ENCODE measurements at regions of chr2 and their contacts with region 1.

Region 1: GRCh38 chr2:45237850-45238542 is 228.7 kb upstream of the SIX2 start:
- DNase-seq: peak; percentile 99
- ATAC-seq: peak; percentile 90
- H3K4me3 ChIP-seq: 0 out of 2 replicates have a peak overlapping the region, but pooled peaks have one; percentile 11
- H3K27ac ChIP-seq: peak overlapping the region; percentile 95
- H3K4me1 ChIP-seq: peaks cover 52% of the 10 kb centered on the region
- H3K27me3 ChIP-seq: no peaks in the 10 kb centered on the region
- CTCF ChIP-seq: peak; percentile 71

Region 2: GRCh38 chr2:44981136-44982108 is 256.6 kb before region 1 on chr2:
- CTCF ChIA-PET with region 1: no interaction called
- POLR2A ChIA-PET with region 1: no interaction called
- intact Hi-C with region 1: loop called (anchors 1 kb)
- DNase-seq: peak; percentile 89
- ATAC-seq: peak; percentile 97
- H3K4me3 ChIP-seq: no peak overlapping the region
- H3K27ac ChIP-seq: no peak overlapping the region
- H3K4me1 ChIP-seq: peaks cover 6% of the 10 kb centered on the region
- H3K27me3 ChIP-seq: no peaks in the 10 kb centered on the region
- CTCF ChIP-seq: peak; percentile 92

Region 3: DNA sequence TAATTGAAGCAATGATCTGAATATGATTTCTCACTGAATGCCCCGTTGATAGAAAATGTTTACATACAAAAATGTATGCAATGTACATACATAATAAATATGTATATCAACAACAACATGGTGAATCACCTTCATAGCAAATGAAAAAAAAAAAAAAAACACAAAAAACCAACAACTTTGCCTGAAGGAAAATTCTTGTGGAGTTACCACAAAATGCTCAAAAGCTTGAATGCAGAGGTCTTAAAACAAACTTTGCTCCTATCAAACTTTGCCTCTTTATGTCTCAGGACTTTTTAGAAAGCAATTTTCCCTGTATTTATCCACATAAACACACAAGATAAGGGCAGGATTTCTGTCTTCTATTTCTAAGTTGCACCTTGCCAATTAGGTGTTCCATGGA is 135.9 kb before region 1 on chr2:
- CTCF ChIA-PET with region 1: no interaction called
- POLR2A ChIA-PET with region 1: no interaction called
- intact Hi-C with region 1: loop called (anchors 5 kb)
- DNase-seq: peak; percentile 59
- ATAC-seq: no peak
- H3K4me3 ChIP-seq: peak overlapping the region; percentile 7; the same call in 1 of the 2 replicates
- H3K27ac ChIP-seq: peak overlapping the region; percentile 43
- H3K4me1 ChIP-seq: peaks cover 38% of the 10 kb centered on the region
- H3K27me3 ChIP-seq: no peaks in the 10 kb centered on the region
- CTCF ChIP-seq: no peak

Region 4: DNA sequence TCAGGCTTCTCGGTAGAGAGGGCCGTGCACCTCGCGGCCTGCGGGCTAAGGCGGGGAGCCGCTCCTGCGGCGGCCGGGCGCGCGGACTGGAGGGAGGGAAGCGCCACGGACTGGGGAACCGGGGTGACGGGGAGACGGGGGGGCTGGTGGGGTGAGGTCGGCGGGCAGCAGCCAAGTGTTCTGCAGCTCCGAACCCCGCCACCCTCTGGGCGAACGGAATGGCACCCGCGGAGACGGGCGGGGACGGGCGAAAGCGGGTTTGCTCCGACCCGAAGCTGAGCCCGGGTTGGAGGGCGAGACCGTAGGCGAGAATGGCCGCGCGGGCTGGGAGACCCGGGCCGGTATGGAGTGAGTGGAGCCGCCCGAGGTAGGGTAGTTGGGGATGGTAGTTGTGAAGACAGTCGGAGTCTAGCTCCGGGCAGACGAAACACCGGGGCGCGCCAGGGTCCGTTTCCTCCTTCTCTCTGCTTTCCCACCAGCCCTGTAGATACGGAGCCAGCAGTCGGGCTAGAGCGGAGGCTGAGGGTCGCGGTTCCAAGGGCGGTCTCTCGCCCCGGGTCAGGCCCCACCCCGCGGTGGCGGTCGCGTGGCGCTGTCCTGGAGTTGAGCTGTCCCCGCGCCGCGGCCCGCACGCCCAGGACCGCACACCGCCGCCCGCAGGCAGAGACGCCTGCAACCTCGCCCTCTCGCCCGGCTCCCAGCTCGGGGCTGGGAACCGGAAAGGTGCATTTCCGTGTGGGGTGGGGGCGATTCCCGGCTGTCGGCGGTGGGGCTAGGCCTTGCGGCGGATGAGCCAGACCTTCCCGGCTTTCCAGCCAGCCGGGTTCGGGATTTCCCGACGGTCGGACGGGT is 68.4 kb before region 1 on chr2:
- CTCF ChIA-PET with region 1: interaction called, 7 read pairs
- POLR2A ChIA-PET with region 1: interaction called, 12 read pairs
- intact Hi-C with region 1: loop called (anchors 1 kb)
- DNase-seq: peak; percentile 39
- ATAC-seq: peak; percentile 24
- H3K4me3 ChIP-seq: peak overlapping the region; percentile 73
- H3K27ac ChIP-seq: peak overlapping the region; percentile 93
- H3K4me1 ChIP-seq: peaks cover 74% of the 10 kb centered on the region
- H3K27me3 ChIP-seq: no peaks in the 10 kb centered on the region
- CTCF ChIP-seq: no peak

Region 5: DNA sequence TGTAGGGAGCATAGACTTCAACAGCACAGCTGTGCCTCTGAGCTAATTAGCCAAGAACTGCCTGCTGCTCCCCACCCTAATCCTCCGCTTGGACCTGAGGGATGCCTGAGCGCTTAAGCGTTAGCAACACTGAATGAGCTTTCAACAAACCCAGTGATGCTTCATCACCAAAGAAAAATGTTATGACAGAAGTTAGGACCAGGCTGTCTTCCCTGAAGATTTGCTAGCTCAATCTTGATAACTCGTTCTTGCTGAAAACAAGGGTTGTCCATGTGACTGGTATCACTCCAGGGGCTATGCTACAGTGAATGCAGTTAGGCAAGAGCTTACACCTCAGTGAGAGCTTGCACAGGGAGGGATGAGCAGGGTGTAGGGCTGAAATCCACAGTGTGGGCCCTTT is 38.0 kb before region 1 on chr2:
- CTCF ChIA-PET with region 1: no interaction called
- POLR2A ChIA-PET with region 1: no interaction called
- intact Hi-C with region 1: no loop called
- DNase-seq: no peak
- ATAC-seq: no peak
- H3K4me3 ChIP-seq: no peak overlapping the region
- H3K27ac ChIP-seq: no peak overlapping the region
- H3K4me1 ChIP-seq: no peaks in the 10 kb centered on the region
- H3K27me3 ChIP-seq: no peaks in the 10 kb centered on the region
- CTCF ChIP-seq: no peak

Region 6: GRCh38 chr2:45275242-45275805 is 37.3 kb after region 1 on chr2:
- CTCF ChIA-PET with region 1: no interaction called
- POLR2A ChIA-PET with region 1: no interaction called
- intact Hi-C with region 1: loop called (anchors 1 kb)
- DNase-seq: peak; percentile 94
- ATAC-seq: peak; percentile 57
- H3K4me3 ChIP-seq: no peak overlapping the region
- H3K27ac ChIP-seq: peak overlapping the region; percentile 93
- H3K4me1 ChIP-seq: peaks cover 80% of the 10 kb centered on the region
- H3K27me3 ChIP-seq: no peaks in the 10 kb centered on the region
- CTCF ChIP-seq: no peak

Region 7: DNA sequence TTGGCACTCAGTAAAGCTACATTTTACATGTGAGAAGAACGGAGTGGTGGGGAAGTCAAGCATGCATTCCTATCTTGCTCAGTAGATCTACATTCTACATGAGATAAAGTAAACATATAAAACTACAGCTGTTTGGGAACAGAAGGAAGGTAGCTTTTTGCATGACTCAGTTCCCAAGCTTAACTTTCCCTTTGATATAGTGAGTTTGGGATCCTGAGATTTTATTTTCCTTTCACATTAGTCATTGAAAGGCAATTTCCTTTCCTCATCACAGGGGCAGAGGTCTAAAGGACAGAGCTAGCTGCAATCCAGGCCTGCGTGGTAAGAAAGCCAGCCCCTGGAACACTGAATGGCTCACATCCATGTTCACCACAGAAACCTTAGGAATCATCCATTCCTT is 115.9 kb after region 1 on chr2:
- CTCF ChIA-PET with region 1: interaction called, 3 read pairs
- POLR2A ChIA-PET with region 1: interaction called, 3 read pairs
- intact Hi-C with region 1: loop called (anchors 10 kb)
- DNase-seq: peak; percentile 98
- ATAC-seq: peak; percentile 96
- H3K4me3 ChIP-seq: no peak overlapping the region
- H3K27ac ChIP-seq: peak overlapping the region; percentile 95
- H3K4me1 ChIP-seq: peaks cover 30% of the 10 kb centered on the region
- H3K27me3 ChIP-seq: no peaks in the 10 kb centered on the region
- CTCF ChIP-seq: no peak

Region 8: DNA sequence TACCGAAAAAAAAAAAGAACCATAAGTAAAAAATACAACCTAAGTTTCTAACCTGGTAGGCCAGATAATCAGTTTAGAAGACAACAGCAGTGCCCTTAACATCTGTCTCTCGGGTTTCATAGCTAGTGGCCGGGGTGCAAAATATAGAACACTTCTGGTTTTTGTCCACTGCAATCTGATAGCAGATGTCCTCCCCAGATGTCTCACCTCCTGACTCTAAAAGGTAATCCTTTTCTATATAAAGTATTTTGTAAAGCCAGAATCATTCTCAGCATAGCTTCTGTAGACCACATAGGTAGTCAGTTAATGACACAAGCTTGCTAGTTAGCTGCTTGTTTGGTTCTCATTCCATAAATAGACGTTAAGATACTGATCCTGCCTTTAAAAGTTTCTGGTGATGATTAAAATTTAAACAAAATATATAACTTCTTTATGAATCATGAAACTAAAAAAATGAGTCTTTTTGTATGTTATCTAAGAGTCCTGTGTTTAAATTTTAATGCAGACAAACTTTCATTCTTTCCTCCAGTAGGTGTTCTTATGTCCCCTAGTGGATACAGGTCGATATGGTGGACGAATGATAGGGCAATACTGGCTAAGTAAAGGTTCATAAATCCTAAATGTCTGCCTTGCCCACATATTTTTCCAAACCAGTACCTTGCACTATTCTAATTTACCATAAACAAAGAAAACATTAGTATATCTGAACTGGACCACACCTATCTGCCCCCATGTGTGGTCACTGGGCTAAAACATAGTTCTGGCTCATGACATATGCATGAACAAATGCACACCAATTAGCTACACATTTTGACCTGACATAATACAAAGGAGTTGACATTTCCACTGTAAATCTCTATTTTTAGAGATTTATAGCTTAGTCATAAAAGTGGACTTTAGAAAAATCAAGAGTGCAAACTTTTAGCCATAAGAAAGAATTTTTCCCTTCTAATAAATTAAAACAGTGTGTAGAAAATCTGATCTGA is 202.1 kb after region 1 on chr2:
- CTCF ChIA-PET with region 1: no interaction called
- POLR2A ChIA-PET with region 1: no interaction called
- intact Hi-C with region 1: loop called (anchors 1 kb)
- DNase-seq: peak; percentile 59
- ATAC-seq: peak; percentile 76
- H3K4me3 ChIP-seq: no peak overlapping the region
- H3K27ac ChIP-seq: peak overlapping the region; percentile 71
- H3K4me1 ChIP-seq: peaks cover 21% of the 10 kb centered on the region
- H3K27me3 ChIP-seq: no peaks in the 10 kb centered on the region
- CTCF ChIP-seq: peak; percentile 80

Region 9: DNA sequence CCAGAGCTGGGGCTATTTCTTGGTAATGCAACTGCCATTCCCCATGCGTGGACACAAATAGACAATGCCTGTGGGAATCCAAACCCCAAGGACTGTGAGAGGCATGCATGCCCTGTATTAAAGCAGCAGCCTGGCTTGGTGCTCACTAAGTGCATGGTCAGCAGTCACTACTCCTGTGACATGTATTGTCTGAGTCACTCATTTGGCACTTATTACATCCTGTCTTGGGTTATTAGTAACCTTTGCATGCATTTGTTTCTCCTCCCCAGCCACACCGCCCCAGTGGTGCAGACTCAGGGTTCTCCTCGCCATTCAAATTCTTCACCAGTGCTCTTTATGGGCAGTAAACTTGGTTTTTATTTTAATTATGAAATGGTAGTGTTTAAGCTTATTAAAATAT is 443.7 kb after region 1 on chr2:
- CTCF ChIA-PET with region 1: no interaction called
- POLR2A ChIA-PET with region 1: no interaction called
- intact Hi-C with region 1: no loop called
- DNase-seq: peak; percentile 92
- ATAC-seq: peak; percentile 99
- H3K4me3 ChIP-seq: no peak overlapping the region
- H3K27ac ChIP-seq: peak overlapping the region; percentile 55
- H3K4me1 ChIP-seq: peaks cover 23% of the 10 kb centered on the region
- H3K27me3 ChIP-seq: no peaks in the 10 kb centered on the region
- CTCF ChIP-seq: no peak